ENCODE measurements at regions of chr1 and their contacts with region 1.

Region 1: GRCh38 chr1:205528887-205529825 is 24.7 kb downstream of the CDK18 start:
- DNase-seq: peak; percentile 74 to 85 (median 82)
- ATAC-seq: peak; percentile 76
- H3K4me3 ChIP-seq: no peak overlapping the region
- H3K27ac ChIP-seq: no peak overlapping the region
- H3K4me1 ChIP-seq: peaks cover 10% of the 10 kb centered on the region
- H3K27me3 ChIP-seq: no peaks in the 10 kb centered on the region
- CTCF ChIP-seq: peak; percentile 81 to 94 (median 88)
- POLR2A ChIP-seq: no peak

Region 2: GRCh38 chr1:205335643-205336091 is 193.5 kb before region 1 on chr1:
- intact Hi-C with region 1: loop called (anchors 10 kb)
- DNase-seq: peak; percentile 89 to 91 (median 90)
- ATAC-seq: peak; percentile 93
- H3K4me3 ChIP-seq: no peak overlapping the region
- H3K27ac ChIP-seq: no peak overlapping the region
- H3K4me1 ChIP-seq: no peaks in the 10 kb centered on the region
- H3K27me3 ChIP-seq: no peaks in the 10 kb centered on the region
- CTCF ChIP-seq: peak; percentile 94 to 100 (median 99)
- POLR2A ChIP-seq: no peak

Region 3: GRCh38 chr1:205493241-205494085 is 35.7 kb before region 1 on chr1:
- intact Hi-C with region 1: loop called (anchors 5 kb)
- DNase-seq: peak; percentile 36 to 45 (median 40)
- ATAC-seq: peak; percentile 59
- H3K4me3 ChIP-seq: no peak overlapping the region
- H3K27ac ChIP-seq: peak overlapping the region in 3 of 4 donors; percentile 7 to 51 (median 14)
- H3K4me1 ChIP-seq: peaks cover 30% of the 10 kb centered on the region
- H3K27me3 ChIP-seq: no peaks in the 10 kb centered on the region
- CTCF ChIP-seq: no peak
- POLR2A ChIP-seq: no peak

Region 4: GRCh38 chr1:205578780-205579606 is 49.8 kb after region 1 on chr1:
- intact Hi-C with region 1: no loop called
- DNase-seq: peak in 1 of 4 donors; percentile 9
- ATAC-seq: no peak
- H3K4me3 ChIP-seq: no peak overlapping the region
- H3K27ac ChIP-seq: no peak overlapping the region
- H3K4me1 ChIP-seq: peaks cover 28% of the 10 kb centered on the region
- H3K27me3 ChIP-seq: no peaks in the 10 kb centered on the region
- CTCF ChIP-seq: no peak
- POLR2A ChIP-seq: no peak

Region 5: GRCh38 chr1:205610036-205610435 is 80.9 kb after region 1 on chr1:
- intact Hi-C with region 1: no loop called
- DNase-seq: no peak
- ATAC-seq: no peak
- H3K4me3 ChIP-seq: no peak overlapping the region
- H3K27ac ChIP-seq: peak overlapping the region in 3 of 4 donors; percentile 4 to 59 (median 7)
- H3K4me1 ChIP-seq: peaks cover 32% of the 10 kb centered on the region
- H3K27me3 ChIP-seq: no peaks in the 10 kb centered on the region
- CTCF ChIP-seq: no peak
- POLR2A ChIP-seq: no peak

Region 6: DNA sequence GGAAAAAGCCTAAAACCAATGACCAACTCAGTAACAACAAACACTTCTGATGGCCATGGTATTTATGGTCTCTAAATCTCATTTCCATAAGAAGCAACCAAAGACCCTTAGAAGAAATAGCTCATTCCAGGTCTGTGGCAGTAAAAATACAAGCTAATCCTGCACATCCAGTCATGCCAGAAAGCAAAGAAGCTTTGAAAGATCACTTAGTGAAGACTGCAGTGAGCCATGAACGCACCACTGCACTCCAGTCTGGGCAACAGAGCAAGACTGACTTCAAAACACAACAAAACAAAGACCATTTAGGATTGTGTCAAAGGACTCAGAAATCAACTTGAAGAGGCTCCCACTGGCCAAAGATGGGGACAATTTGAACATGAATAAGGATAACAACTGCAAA is 121.1 kb after region 1 on chr1:
- intact Hi-C with region 1: loop called (anchors 5 kb)
- DNase-seq: no peak
- ATAC-seq: no peak
- H3K4me3 ChIP-seq: no peak overlapping the region
- H3K27ac ChIP-seq: no peak overlapping the region
- H3K4me1 ChIP-seq: no peaks in the 10 kb centered on the region
- H3K27me3 ChIP-seq: no peaks in the 10 kb centered on the region
- CTCF ChIP-seq: no peak
- POLR2A ChIP-seq: no peak

Measured in body of pancreas (tissue), 4 donors.